Activated CD4-positive, alpha-beta T cell treated with anti-CD3 and anti-CD28 coated beads, Interleukin-2, amount 10 ng/mL, durations not matched to agents 24 days and 14 days (primary cell): ENCODE measurements at regions of chrX and their contacts with region 1.

Region 1: DNA sequence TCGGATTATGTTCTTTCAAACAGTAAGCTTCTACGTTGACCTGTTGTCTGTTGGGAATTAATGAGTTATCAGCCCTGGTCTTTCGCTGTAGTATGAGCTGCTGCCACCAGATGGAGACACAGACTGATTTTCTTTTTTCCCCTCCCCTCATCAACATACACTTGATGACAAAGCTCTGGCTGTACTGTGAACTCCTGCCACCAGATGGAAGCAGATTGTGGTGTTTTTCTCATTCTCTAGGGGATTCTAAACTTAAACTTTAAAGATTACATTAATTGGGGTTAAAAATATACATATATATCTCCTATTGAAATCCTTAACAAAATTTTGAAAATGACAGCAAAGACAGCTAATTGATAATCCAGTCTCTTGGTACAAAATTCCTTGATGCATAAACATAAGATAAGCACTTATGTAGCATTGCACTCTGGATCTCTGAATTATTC is 44.8 kb downstream of the SMS start:
- DNase-seq: peak; percentile 89
- H3K4me3 Mint-ChIP-seq: no peak overlapping the region
- H3K27ac Mint-ChIP-seq: peak overlapping the region; percentile 61
- H3K4me1 Mint-ChIP-seq: peaks cover 14% of the 10 kb centered on the region
- H3K27me3 Mint-ChIP-seq: no peaks in the 10 kb centered on the region

Region 2: DNA sequence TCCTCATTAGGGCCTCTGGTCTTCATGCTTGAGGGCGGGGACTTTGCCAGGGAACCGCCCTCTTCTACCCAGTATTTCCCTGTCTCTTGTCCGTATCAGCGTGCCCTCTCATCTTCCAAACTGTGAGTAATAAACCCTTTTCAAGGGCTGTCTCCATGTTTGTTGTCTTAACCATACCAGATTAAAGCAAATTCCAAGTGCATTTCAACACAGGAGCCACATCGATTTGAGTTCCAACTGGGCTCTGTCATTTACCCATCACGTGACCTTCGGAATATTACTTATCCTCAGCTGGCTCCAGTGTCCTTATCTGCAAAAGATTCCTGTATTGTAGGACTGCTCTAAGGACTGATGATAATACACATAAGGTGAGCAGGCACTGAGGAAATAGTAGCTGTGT is 40.4 kb after region 1 on chrX:
- intact Hi-C with region 1: loop called (anchors 1 kb)
- DNase-seq: no peak
- H3K4me3 Mint-ChIP-seq: no peak overlapping the region
- H3K27ac Mint-ChIP-seq: no peak overlapping the region
- H3K4me1 Mint-ChIP-seq: peaks cover 11% of the 10 kb centered on the region
- H3K27me3 Mint-ChIP-seq: no peaks in the 10 kb centered on the region

Region 3: GRCh38 chrX:22135994-22136684 is 150.8 kb after region 1 on chrX:
- intact Hi-C with region 1: loop called (anchors 1 kb)
- DNase-seq: peak; percentile 70
- H3K4me3 Mint-ChIP-seq: no peak overlapping the region
- H3K27ac Mint-ChIP-seq: peak overlapping the region; percentile 60
- H3K4me1 Mint-ChIP-seq: peaks cover 10% of the 10 kb centered on the region
- H3K27me3 Mint-ChIP-seq: no peaks in the 10 kb centered on the region

Region 4: DNA sequence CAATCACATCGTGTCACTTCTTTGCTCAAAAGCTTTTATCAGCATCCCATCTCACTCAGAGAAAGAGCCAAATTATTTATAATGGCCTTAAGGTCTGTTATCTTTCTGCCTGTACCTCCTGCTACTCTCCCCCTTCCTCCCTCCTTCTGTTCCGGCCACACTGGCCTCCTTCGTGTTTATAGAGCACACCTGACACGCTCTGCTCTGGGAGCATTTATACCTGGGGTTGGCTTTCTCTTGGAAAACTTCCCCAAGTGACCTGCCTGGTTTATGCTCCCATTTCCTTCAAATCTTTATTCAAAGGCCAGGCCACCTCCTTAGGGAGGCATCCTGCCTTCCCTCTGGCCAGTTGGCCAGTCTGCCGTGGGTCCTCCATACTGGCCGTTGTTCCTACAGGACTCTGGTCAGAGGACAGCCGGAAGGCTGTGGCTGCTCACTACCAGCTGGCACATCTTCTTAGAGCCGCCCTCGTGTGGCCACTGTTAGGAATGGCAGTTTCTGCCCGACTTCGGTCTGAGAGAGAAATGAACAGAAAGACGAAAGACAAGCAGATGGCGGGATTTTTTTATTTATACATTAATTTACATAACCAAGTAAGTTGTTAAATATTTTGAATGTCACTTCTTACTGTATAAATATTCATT is 207.2 kb after region 1 on chrX:
- intact Hi-C with region 1: loop called (anchors 1 kb)
- DNase-seq: peak; percentile 82
- H3K4me3 Mint-ChIP-seq: peak overlapping the region; percentile 17
- H3K27ac Mint-ChIP-seq: no peak overlapping the region
- H3K4me1 Mint-ChIP-seq: peaks cover 3% of the 10 kb centered on the region
- H3K27me3 Mint-ChIP-seq: no peaks in the 10 kb centered on the region

Region 5: GRCh38 chrX:22365460-22365859 is 380.1 kb after region 1 on chrX:
- intact Hi-C with region 1: no loop called
- DNase-seq: no peak
- H3K4me3 Mint-ChIP-seq: no peak overlapping the region
- H3K27ac Mint-ChIP-seq: no peak overlapping the region
- H3K4me1 Mint-ChIP-seq: no peaks in the 10 kb centered on the region
- H3K27me3 Mint-ChIP-seq: no peaks in the 10 kb centered on the region

Region 6: DNA sequence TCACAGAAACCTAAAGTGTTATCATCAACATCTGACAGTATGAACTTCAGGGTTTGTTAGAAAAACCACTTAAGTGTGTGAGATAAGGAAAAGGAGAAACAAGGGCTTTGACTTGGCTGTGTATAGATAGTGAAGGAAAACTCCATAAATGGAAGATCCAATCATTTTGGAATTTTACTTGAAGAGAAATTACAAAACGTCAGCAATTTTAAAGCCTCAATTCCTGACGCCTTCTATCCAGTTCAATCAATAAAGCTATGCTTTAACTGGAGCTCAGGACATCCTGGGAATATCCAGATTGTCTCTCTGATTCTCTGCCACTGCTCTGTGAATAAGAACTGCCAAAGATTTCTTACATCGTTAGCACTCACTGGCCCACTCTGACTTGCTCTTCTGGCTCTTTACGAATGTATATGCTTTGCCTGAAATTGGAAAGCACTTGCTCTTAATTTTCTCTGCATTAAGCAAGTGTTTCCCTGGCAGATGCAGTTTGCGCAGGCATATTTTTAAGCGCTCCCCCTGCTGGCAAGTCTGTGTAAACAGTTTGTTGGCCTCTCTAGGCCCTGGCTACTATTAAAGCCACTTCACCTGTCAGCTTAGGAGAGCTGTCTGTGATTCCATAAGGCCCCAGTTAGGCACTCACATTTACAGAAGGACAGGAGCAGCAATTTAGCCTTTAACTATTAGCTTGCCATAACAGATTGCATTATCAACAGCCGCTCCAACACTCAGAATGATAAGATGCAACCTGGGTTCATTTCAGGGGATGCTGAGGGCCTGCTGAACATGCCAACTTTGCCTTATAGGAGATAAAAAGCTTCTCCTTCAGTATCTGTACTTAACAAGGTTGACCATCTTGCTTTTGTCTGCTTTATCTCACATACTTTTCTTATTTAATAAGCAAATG is 763.0 kb after region 1 on chrX:
- intact Hi-C with region 1: loop called (anchors 1 kb)
- DNase-seq: peak; percentile 75
- H3K4me3 Mint-ChIP-seq: no peak overlapping the region
- H3K27ac Mint-ChIP-seq: no peak overlapping the region
- H3K4me1 Mint-ChIP-seq: no peaks in the 10 kb centered on the region
- H3K27me3 Mint-ChIP-seq: no peaks in the 10 kb centered on the region

Region 7: GRCh38 chrX:23317799-23318724 is 1332.7 kb after region 1 on chrX:
- intact Hi-C with region 1: loop called (anchors 5 kb)
- DNase-seq: peak; percentile 69
- H3K4me3 Mint-ChIP-seq: no peak overlapping the region
- H3K27ac Mint-ChIP-seq: no peak overlapping the region
- H3K4me1 Mint-ChIP-seq: no peaks in the 10 kb centered on the region
- H3K27me3 Mint-ChIP-seq: peaks cover 4% of the 10 kb centered on the region